HepG2 (cell line): ENCODE measurements at regions of chr10 and their contacts with region 1.

Region 1: DNA sequence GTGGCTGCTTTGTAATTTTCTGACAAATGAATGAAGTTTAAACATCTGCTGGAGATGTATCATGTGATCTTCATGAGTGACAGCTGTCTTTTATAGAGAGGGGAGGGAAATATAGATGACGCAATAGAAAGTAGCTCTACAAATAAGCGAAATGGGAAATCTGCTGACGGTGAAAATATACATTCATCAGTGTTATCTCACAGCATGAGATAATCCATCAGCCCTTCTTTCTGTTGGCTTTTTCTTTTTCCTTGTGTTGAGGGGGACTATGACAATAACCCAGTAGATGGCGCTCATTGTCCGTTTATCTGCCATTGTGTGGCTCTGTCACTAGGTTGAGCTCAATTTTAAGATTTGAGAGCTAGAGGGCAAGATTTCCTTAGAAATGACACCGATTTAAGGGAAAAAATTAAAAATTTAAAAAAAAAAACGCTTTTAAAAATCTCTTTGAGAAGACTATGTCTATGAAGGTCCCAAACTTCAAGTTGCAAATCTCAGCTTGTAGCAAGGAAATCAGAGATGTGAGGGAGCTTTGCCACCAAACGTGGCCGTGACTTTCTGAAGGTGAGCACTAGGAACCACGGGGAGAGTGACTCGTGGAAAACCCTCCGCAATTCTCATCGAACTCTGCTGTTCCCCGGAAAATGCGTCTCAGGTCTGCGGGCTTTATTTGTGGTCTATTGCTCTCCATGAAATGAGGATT is 114.6 kb upstream of the SFMBT2 start:
- DNase-seq: peak; percentile 71
- ATAC-seq: peak; percentile 88
- H3K4me3 ChIP-seq: peak overlapping the region; percentile 47 to 53 (median 47)
- H3K27ac ChIP-seq: no peak overlapping the region
- H3K4me1 ChIP-seq: peaks cover 9% of the 10 kb centered on the region; the same call in 1 of the 2 replicates
- H3K27me3 ChIP-seq: peaks cover 2 to 16% of the 10 kb centered on the region in 2 experiments; a peak in 3 of 5 replicates
- CTCF ChIP-seq: peak; percentile 87
- EP300 ChIP-seq: no peak
- POLR2A ChIP-seq: no peak
- RAD21 ChIP-seq: peak; percentile 79

Region 2: DNA sequence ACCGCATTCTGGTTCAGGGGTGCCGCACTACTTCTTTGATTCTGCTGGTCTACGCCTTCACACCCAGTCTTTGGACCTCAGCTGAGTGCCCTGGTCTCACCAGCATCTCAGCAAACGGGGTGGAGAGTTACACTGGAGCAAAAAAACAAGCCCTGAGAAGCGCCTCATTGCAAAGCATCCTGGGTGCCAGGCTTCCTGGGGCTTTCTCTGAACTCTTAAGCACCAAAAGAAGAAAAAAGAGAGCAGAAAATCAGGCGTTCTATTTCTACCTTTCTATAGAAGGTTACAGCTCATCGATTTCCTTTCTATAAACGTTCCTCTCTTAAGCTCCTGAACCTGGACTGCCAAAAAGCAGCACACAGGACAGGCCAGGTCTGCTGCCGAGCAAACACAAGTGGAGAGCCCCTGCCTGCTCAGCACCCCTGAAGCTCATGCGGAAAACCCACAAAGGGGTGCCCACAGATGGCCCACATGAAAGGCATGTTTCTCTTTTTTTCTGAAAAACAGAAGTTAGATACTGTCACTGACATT is 332.6 kb before region 1 on chr10:
- CTCF ChIA-PET with region 1: no interaction called
- POLR2A ChIA-PET with region 1: no interaction called
- in situ Hi-C with region 1: no loop called
- intact Hi-C with region 1: no loop called
- DNase-seq: no peak
- ATAC-seq: no peak
- H3K4me3 ChIP-seq: no peak overlapping the region
- H3K27ac ChIP-seq: no peak overlapping the region
- H3K4me1 ChIP-seq: no peaks in the 10 kb centered on the region
- H3K27me3 ChIP-seq: peaks cover 1 to 15% of the 10 kb centered on the region in 2 experiments; a peak in 3 of 5 replicates
- CTCF ChIP-seq: no peak
- EP300 ChIP-seq: no peak
- POLR2A ChIP-seq: no peak
- RAD21 ChIP-seq: no peak

Region 3: GRCh38 chr10:7445474-7446185 is 79.8 kb before region 1 on chr10:
- CTCF ChIA-PET with region 1: no interaction called
- POLR2A ChIA-PET with region 1: no interaction called
- in situ Hi-C with region 1: no loop called
- intact Hi-C with region 1: no loop called
- DNase-seq: no peak
- ATAC-seq: no peak
- H3K4me3 ChIP-seq: no peak overlapping the region
- H3K27ac ChIP-seq: no peak overlapping the region
- H3K4me1 ChIP-seq: no peaks in the 10 kb centered on the region
- H3K27me3 ChIP-seq: peaks cover 0 to 31% of the 10 kb centered on the region in 2 experiments; a peak in 3 of 5 replicates
- CTCF ChIP-seq: no peak
- EP300 ChIP-seq: no peak
- POLR2A ChIP-seq: no peak
- RAD21 ChIP-seq: no peak

Region 4: GRCh38 chr10:7457478-7458316 is 67.8 kb before region 1 on chr10:
- CTCF ChIA-PET with region 1: no interaction called
- POLR2A ChIA-PET with region 1: no interaction called
- in situ Hi-C with region 1: no loop called
- intact Hi-C with region 1: no loop called
- DNase-seq: no peak
- ATAC-seq: no peak
- H3K4me3 ChIP-seq: no peak overlapping the region
- H3K27ac ChIP-seq: no peak overlapping the region
- H3K4me1 ChIP-seq: no peaks in the 10 kb centered on the region
- H3K27me3 ChIP-seq: peaks cover 3 to 5% of the 10 kb centered on the region in 2 experiments; a peak in 1 of 5 replicates
- CTCF ChIP-seq: no peak
- EP300 ChIP-seq: no peak
- POLR2A ChIP-seq: no peak
- RAD21 ChIP-seq: no peak

Region 5: DNA sequence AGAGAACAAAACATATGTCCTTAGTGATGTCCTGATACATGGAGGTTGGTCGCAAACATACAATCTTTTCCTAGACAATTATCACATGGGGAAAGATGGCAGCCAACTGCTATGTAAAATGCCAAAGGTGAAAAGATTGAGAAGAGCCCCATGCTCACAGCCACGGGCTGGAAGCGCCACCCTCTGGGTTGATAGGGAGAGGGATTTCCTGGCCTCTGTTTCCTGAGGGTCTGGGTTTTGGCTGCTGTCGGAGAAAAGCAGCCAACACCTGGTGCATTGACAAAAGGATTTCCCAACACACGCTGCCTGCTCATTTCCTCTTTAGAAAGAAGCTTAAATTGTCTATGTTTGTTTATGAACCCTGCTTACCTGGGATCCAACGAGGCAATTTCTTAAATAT is 97.5 kb after region 1 on chr10:
- CTCF ChIA-PET with region 1: interaction called, 5 read pairs
- POLR2A ChIA-PET with region 1: no interaction called
- in situ Hi-C with region 1: no loop called
- intact Hi-C with region 1: loop called (anchors 1 kb)
- DNase-seq: no peak
- ATAC-seq: peak; percentile 52; the same call in 2 of the 3 replicates
- H3K4me3 ChIP-seq: no peak overlapping the region
- H3K27ac ChIP-seq: no peak overlapping the region
- H3K4me1 ChIP-seq: no peaks in the 10 kb centered on the region
- H3K27me3 ChIP-seq: no peaks in the 10 kb centered on the region
- CTCF ChIP-seq: peak; percentile 52
- EP300 ChIP-seq: no peak
- POLR2A ChIP-seq: no peak
- RAD21 ChIP-seq: peak; percentile 47

Region 6: GRCh38 chr10:7687228-7687907 is 161.9 kb after region 1 on chr10:
- CTCF ChIA-PET with region 1: interaction called, 57 read pairs
- POLR2A ChIA-PET with region 1: interaction called, 26 read pairs
- in situ Hi-C with region 1: loop called (anchors 5 kb)
- intact Hi-C with region 1: loop called (anchors 1 kb)
- DNase-seq: peak; percentile 95
- ATAC-seq: peak; percentile 66
- H3K4me3 ChIP-seq: peak overlapping the region in 2 of 3 experiments; percentile 17 to 47; a peak in 1 of 6 replicates
- H3K27ac ChIP-seq: peak overlapping the region; percentile 94
- H3K4me1 ChIP-seq: peaks cover 45% of the 10 kb centered on the region
- H3K27me3 ChIP-seq: no peaks in the 10 kb centered on the region; a peak in 1 of 5 replicates
- CTCF ChIP-seq: peak; percentile 95
- EP300 ChIP-seq: 0 out of 4 replicates have a peak, but pooled peaks of 1 of the 2 experiments have one; percentile 6
- POLR2A ChIP-seq: no peak
- RAD21 ChIP-seq: peak; percentile 91

Region 7: DNA sequence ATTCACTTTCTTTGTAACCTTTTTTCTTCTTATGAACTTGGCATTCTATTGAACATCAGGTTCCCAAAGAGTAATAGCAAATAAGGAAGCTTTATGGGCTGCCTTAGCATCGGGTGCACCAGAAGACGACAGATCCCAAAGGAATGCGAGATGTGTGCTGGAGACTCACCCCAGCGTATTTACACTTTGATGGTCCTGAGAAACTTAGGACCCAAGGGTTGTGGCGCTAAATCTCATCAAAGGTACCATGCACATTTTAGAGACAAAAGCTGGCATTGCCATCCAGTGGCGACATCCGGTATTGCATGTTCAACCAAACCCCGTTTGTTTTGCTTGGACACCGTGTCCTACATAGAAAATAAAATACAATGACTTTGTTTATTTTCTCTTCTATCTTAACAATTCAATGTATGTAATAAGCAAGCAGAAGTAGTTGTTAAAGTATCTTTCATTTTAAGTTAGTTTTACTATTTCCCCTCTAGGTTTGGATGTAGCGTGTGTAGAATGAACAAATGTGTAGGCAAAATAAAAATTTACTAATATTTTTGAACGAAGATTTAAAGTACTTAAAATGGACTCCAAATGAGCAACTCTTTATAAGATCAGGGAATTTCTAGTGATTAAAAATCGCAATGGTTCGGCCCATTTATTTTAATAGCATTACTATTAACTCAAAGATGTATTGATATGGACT is 1683.8 kb after region 1 on chr10:
- CTCF ChIA-PET with region 1: no interaction called
- POLR2A ChIA-PET with region 1: no interaction called
- in situ Hi-C with region 1: no loop called
- intact Hi-C with region 1: loop called (anchors 2 kb)
- DNase-seq: peak; percentile 38
- ATAC-seq: peak; percentile 61
- H3K4me3 ChIP-seq: no peak overlapping the region
- H3K27ac ChIP-seq: no peak overlapping the region
- H3K4me1 ChIP-seq: no peaks in the 10 kb centered on the region
- H3K27me3 ChIP-seq: no peaks in the 10 kb centered on the region
- CTCF ChIP-seq: peak; percentile 81
- EP300 ChIP-seq: no peak
- POLR2A ChIP-seq: no peak
- RAD21 ChIP-seq: peak; percentile 32; the same call in 1 of the 2 replicates